ENCODE measurements at regions of chr10 and their contacts with region 1.

Region 1: DNA sequence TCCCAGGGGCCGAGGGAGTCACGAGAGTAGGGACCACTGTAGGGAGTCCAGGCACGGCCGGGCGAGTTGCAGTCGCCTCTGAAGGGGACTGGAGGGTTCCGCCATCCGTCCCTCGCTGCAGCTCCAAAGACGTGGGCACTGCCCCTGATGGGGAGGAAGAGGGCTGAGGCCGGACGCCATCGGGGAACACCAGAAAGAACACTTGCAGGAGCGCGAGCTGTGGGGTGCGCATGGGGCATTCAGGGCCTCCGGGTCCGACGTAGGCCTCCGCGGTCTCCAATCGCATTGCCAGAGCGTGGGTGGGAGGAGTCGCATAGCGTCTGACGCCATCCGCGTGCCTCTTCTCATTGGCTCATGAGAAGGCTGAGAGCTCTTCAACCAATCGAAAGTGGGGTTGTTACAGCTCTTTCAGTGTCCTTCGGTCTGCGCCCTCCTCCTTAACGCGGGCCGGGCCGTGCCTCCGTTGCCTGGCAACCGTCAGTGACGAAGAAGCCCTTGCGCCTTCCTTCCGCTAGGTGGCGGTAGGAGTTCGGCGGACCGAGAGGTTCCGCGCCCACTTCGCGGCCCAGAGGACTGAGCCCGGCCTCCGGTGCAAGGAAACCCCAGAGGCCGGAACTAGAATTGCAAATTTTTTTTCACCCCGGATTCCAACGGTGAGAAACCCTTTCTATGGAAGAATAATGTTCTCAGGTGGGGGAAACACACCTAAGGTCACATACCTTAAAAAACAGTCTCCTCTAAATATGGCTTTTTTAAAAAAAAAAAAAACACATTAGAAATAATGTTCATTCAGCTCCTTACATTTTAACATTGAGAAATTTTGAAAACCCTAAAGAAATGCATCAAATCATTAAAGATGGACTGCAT is at the start of gene TCTN3:
- DNase-seq: peak; percentile 85 to 98 (median 97)
- ATAC-seq: peak; percentile 98
- H3K4me3 ChIP-seq: peak within 1 kb of the TSS; percentile 93
- H3K4me3 Mint-ChIP-seq: peak within 1 kb of the TSS; percentile 89 to 99 (median 96)
- H3K27ac ChIP-seq: peak within 1 kb of the TSS; percentile 95
- H3K27ac Mint-ChIP-seq: peak within 1 kb of the TSS; percentile 91 to 98 (median 96)
- H3K4me1 ChIP-seq: peaks cover 11 to 15% of the 10 kb centered on the region in 2 donors
- H3K4me1 Mint-ChIP-seq: peaks cover 27 to 51% (median 42%) of the 10 kb centered on the region in 7 donors
- H3K27me3 ChIP-seq: no peaks in the 10 kb centered on the region
- H3K27me3 Mint-ChIP-seq: peaks cover 0 to 9% (median 2%) of the 10 kb centered on the region in 5 donors
- total RNA-seq, gene TCTN3: 16.2 to 38.3 (median 22.2) TPM

Region 2: GRCh38 chr10:95303535-95303934 is 390.4 kb before region 1 on chr10:
- CTCF ChIA-PET with region 1: no interaction called
- POLR2A ChIA-PET with region 1: no interaction called
- intact Hi-C with region 1: no loop called
- DNase-seq: no peak
- ATAC-seq: no peak
- H3K4me3 ChIP-seq: no peak overlapping the region
- H3K4me3 Mint-ChIP-seq: no peak overlapping the region
- H3K27ac ChIP-seq: no peak overlapping the region
- H3K27ac Mint-ChIP-seq: no peak overlapping the region
- H3K4me1 ChIP-seq: no peaks in the 10 kb centered on the region
- H3K4me1 Mint-ChIP-seq: peaks cover 0 to 3% (median 0%) of the 10 kb centered on the region in 7 donors
- H3K27me3 ChIP-seq: no peaks in the 10 kb centered on the region
- H3K27me3 Mint-ChIP-seq: peaks cover 0 to 7% (median 4%) of the 10 kb centered on the region in 5 donors

Region 3: DNA sequence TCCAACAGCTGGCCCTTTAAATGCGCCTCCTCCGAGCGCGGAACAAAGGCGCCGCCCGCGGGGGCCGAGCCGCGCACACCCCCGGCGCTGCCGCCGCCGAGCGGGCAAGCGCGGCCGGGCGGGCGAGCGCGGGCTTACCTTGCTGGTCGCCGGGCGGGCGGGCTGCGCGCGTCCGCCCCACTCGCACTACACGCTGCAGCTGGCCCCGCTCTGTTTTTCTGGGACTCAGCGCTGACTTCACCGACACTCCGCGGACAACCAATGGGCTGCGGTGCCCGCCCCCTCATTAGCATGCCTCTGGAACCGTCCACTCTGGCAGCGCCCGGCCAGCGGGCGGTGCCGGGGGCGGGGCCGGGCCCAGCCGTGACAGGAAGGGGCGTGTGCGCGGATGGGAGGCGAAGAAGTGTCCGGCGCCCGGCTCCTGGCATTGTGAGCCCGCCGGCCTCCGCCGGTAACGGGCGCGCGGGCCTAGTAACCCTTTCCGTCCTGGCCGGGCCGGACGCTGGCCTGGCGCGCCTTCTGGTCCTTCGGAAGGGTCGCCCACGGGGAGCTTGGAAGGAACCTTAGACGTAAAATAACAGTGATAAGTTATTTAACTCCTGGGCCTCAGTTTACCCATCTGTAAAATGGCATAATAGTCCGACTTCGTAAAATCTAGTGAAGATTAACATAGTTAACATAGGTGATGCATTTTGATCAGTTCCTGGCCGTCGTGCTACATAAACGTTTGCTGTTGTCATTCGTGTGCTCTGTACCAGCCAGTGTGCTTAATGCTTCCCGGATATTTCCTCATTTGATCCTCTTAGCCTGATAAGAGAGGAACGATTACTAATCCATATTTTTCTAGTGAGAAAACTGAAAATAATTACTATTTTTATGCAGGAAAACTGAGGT is 132.5 kb before region 1 on chr10 and contains the start of gene SORBS1:
- CTCF ChIA-PET with region 1: no interaction called
- POLR2A ChIA-PET with region 1: no interaction called
- intact Hi-C with region 1: loop called (anchors 1 kb)
- DNase-seq: peak; percentile 80 to 88 (median 82)
- ATAC-seq: peak; percentile 99
- H3K4me3 ChIP-seq: peak within 1 kb of the TSS; percentile 90
- H3K4me3 Mint-ChIP-seq: peak within 1 kb of the TSS; percentile 96 to 100 (median 99)
- H3K27ac ChIP-seq: peak within 1 kb of the TSS; percentile 66
- H3K27ac Mint-ChIP-seq: peak within 1 kb of the TSS; percentile 76 to 97 (median 89)
- H3K4me1 ChIP-seq: peaks cover 4% of the 10 kb centered on the region in 2 donors
- H3K4me1 Mint-ChIP-seq: peaks cover 7 to 16% (median 11%) of the 10 kb centered on the region in 7 donors
- H3K27me3 ChIP-seq: no peaks in the 10 kb centered on the region
- H3K27me3 Mint-ChIP-seq: peaks cover 0 to 63% (median 5%) of the 10 kb centered on the region in 5 donors
- total RNA-seq, gene SORBS1: 0.58 to 1.9 (median 1.4) TPM

Region 4: DNA sequence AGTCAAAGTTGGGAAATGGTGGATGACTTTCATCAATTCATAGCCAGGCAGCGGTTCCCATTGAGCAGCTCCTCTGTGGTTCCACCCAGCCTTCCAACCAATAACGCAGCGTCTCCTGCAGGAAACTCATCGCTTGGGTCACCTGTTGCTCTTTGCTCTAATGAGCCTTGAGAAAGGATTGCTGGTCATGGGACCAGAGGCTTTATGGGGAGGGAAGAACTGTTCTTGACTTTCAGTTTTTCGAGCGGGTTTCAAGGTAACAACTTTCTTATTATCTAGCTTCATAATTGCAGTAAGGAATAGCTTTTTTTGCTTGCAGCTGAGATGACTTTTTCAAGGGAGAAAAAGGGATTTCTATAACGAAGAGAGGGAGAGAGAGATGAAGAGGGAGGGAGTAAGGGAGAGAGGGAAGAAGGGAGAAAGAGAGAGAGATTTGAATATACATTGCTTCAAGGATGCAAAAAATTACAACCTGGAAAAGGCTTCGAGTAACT is 61.7 kb after region 1 on chr10:
- CTCF ChIA-PET with region 1: no interaction called
- POLR2A ChIA-PET with region 1: no interaction called
- intact Hi-C with region 1: loop called in 1 of 2 experiments (anchors 5 kb)
- DNase-seq: no peak
- ATAC-seq: peak; percentile 64
- H3K4me3 ChIP-seq: no peak overlapping the region
- H3K4me3 Mint-ChIP-seq: peak overlapping the region in 3 of 10 donors; percentile 9 to 79 (median 27)
- H3K27ac ChIP-seq: no peak overlapping the region
- H3K27ac Mint-ChIP-seq: peak overlapping the region in 1 of 9 donors; percentile 77
- H3K4me1 ChIP-seq: peaks cover 0 to 4% of the 10 kb centered on the region in 2 donors
- H3K4me1 Mint-ChIP-seq: peaks cover 0 to 47% (median 7%) of the 10 kb centered on the region in 7 donors
- H3K27me3 ChIP-seq: no peaks in the 10 kb centered on the region
- H3K27me3 Mint-ChIP-seq: peaks cover 18 to 38% (median 27%) of the 10 kb centered on the region in 5 donors

Region 5: GRCh38 chr10:95864906-95865813 is 171.3 kb after region 1 on chr10:
- CTCF ChIA-PET with region 1: interaction called, 18 read pairs
- POLR2A ChIA-PET with region 1: no interaction called
- intact Hi-C with region 1: loop called (anchors 1 kb)
- DNase-seq: peak in 7 of 9 donors; percentile 10 to 40 (median 24)
- ATAC-seq: peak; percentile 88
- H3K4me3 ChIP-seq: no peak overlapping the region
- H3K4me3 Mint-ChIP-seq: peak overlapping the region in 1 of 10 donors; percentile 24
- H3K27ac ChIP-seq: no peak overlapping the region
- H3K27ac Mint-ChIP-seq: peak overlapping the region in 1 of 9 donors; percentile 83
- H3K4me1 ChIP-seq: no peaks in the 10 kb centered on the region
- H3K4me1 Mint-ChIP-seq: peaks cover 0 to 37% (median 0%) of the 10 kb centered on the region in 7 donors
- H3K27me3 ChIP-seq: no peaks in the 10 kb centered on the region
- H3K27me3 Mint-ChIP-seq: peaks cover 0 to 3% (median 0%) of the 10 kb centered on the region in 5 donors

Region 6: GRCh38 chr10:96043033-96043932 is 349.4 kb after region 1 on chr10 and contains the start of gene CCNJ:
- CTCF ChIA-PET with region 1: no interaction called
- POLR2A ChIA-PET with region 1: interaction called, 3 read pairs
- intact Hi-C with region 1: loop called (anchors 1 kb)
- DNase-seq: peak; percentile 76 to 87 (median 83)
- ATAC-seq: peak; percentile 91
- H3K4me3 ChIP-seq: peak within 1 kb of the TSS; percentile 78
- H3K4me3 Mint-ChIP-seq: peak within 1 kb of the TSS; percentile 83 to 96 (median 92)
- H3K27ac ChIP-seq: peak within 1 kb of the TSS; percentile 81
- H3K27ac Mint-ChIP-seq: peak within 1 kb of the TSS; percentile 80 to 96 (median 87)
- H3K4me1 ChIP-seq: peaks cover 13 to 16% of the 10 kb centered on the region in 2 donors
- H3K4me1 Mint-ChIP-seq: peaks cover 32 to 50% (median 44%) of the 10 kb centered on the region in 7 donors
- H3K27me3 ChIP-seq: peaks cover 3 to 4% of the 10 kb centered on the region in 2 donors
- H3K27me3 Mint-ChIP-seq: peaks cover 4 to 11% (median 8%) of the 10 kb centered on the region in 5 donors
- total RNA-seq, gene CCNJ: 5.6 to 8.0 (median 6.7) TPM

Region 7: DNA sequence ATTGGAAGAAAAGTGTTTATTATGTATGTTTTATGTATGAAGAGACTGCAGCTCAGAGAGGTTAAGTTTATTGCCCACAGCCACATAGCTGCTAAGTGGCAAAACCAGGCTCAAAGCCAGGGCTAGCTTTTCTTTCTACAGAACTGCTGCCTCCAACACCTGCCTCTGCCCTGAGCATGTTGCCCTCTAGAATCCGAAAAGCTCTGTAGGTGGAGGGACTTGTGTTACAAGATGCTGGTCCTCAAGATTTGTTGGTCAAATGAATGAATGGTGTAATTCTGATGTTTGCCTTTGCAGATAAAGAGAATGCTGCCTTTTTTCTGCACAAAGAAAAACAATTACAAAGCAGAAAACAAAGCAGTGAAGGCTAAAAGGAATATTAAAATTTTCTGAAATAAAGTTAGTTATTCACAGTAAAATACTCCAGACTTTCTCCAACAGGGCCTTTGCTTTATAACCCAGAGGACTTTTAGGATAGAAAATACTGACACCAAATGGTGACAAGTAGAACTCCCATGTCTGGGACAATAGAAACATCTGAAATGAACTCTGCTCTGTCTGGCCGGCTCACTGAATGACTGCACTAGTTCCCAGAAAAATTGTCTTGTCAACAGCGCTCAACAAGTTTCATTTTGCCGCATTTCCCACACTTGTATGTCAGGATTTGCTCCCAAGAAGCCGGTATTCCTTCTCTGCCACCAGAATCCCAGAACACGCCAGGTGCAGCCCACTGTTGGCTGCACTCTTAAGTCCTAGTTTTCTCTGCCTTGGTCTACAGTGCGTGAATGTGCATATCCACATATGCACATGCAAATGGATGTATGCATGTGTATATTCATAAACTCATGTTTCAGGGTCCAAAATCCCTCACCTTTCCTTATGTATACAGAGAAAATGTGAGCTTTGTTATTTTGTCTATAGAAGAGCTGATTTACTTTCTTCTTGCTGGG is 599.3 kb after region 1 on chr10:
- CTCF ChIA-PET with region 1: interaction called, 5 read pairs
- POLR2A ChIA-PET with region 1: interaction called, 3 read pairs
- intact Hi-C with region 1: loop called (anchors 1 to 10 kb)
- DNase-seq: peak in 6 of 9 donors; percentile 11 to 54 (median 44)
- ATAC-seq: peak; percentile 70
- H3K4me3 ChIP-seq: no peak overlapping the region
- H3K4me3 Mint-ChIP-seq: peak overlapping the region in 1 of 10 donors; percentile 2
- H3K27ac ChIP-seq: no peak overlapping the region
- H3K27ac Mint-ChIP-seq: peak overlapping the region in 5 of 9 donors; percentile 9 to 89 (median 42)
- H3K4me1 ChIP-seq: peaks cover 0 to 25% of the 10 kb centered on the region in 2 donors
- H3K4me1 Mint-ChIP-seq: peaks cover 8 to 54% (median 43%) of the 10 kb centered on the region in 7 donors
- H3K27me3 ChIP-seq: no peaks in the 10 kb centered on the region
- H3K27me3 Mint-ChIP-seq: peaks cover 0 to 3% (median 0%) of the 10 kb centered on the region in 5 donors

Measured in naive thymus-derived CD4-positive, alpha-beta T cell (primary cell).